ENCODE measurements at regions of chr11 and their contacts with region 1.

Region 1: GRCh38 chr11:117946842-117947526 is 17.8 kb upstream of the TMPRSS13 start:
- DNase-seq: peak; percentile 73
- H3K4me3 Mint-ChIP-seq: peak overlapping the region; percentile 27
- H3K27ac Mint-ChIP-seq: peak overlapping the region; percentile 37
- H3K4me1 Mint-ChIP-seq: peaks cover 83% of the 10 kb centered on the region
- H3K27me3 Mint-ChIP-seq: no peaks in the 10 kb centered on the region

Region 2: DNA sequence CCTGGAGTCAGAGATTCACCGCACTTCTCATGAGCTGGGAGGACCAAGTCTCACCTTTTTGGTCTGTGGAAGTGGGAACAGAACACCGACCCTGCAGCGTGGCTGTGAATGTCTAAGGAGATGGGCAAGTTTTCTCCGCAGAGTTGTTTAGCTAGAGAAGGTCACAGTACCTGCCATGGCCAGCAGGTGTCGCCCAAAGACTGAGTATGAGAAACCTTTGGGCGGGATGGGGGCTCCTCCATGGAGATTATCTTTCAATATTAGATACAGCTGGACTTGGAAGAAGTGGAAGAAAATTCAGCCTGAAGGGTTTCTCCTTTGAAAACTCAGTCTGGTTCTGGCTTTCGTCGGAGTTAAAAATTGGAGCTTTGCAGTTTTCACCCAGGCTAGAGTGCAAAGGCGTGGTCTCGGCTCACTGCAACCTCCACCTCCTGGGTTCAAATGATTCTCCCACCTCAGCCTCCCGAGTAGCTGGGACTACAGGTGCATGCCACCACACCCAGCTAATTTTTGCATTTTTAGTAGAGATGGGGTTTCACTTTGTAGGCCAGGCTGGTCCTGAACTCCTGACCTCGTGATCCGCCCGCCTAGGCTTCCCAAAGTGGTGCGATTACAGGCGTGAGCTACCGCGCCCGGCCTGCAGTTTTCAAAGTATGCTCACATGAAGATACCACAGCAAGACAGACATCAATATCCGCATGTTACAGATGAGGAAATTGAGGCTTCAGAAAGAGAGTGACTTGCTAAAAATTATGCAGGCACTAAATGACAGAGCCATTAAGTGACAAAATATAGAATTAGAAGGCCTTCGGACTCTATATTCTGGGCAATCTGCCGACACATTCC is 139.3 kb before region 1 on chr11:
- intact Hi-C with region 1: loop called (anchors 1 kb)
- DNase-seq: peak; percentile 53
- H3K4me3 Mint-ChIP-seq: no peak overlapping the region
- H3K27ac Mint-ChIP-seq: peak overlapping the region; percentile 30
- H3K4me1 Mint-ChIP-seq: peaks cover 33% of the 10 kb centered on the region
- H3K27me3 Mint-ChIP-seq: peaks cover 5% of the 10 kb centered on the region

Region 3: DNA sequence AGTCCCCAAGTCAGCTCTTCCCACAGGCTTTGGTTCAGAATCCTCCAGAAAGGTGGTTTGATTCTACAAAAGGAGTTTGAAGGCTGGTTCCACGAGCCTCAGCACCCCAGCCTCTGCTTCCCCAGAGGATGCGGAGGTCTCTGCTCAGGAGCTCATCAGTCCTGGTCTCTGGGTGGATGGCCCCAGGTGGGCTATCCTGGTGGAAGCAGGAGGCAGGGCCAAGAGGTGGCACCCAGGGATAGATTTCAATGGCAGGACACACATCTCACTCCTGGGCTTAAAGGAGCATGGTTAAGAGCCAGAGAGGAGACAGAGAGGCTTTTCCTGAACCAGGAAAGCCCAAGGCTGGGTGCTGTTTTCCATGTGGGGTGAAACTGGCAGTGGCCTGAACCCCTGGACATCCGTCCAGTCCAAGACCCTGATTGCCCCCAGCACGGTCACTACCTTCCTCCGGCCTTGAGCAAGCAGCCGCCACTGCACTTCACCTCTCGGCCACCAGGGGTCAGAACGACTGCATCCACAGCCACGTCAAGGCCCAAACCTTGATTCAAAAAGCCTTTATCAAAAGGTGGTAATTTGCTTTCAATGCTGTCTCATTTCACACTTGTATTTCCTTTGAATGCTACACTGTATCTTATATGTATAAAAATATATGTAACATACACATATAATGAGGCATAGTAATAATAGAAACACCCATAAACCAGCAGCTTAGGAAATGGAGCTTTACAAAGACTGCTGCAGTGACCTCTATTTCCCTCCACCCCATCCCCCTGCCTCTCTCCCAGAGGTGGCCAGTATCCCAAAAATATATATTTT is 103.1 kb before region 1 on chr11:
- intact Hi-C with region 1: loop called (anchors 1 kb)
- DNase-seq: peak; percentile 63
- H3K4me3 Mint-ChIP-seq: no peak overlapping the region
- H3K27ac Mint-ChIP-seq: no peak overlapping the region
- H3K4me1 Mint-ChIP-seq: no peaks in the 10 kb centered on the region
- H3K27me3 Mint-ChIP-seq: peaks cover 17% of the 10 kb centered on the region

Region 4: GRCh38 chr11:117959438-117960149 is 12.6 kb after region 1 on chr11:
- intact Hi-C with region 1: loop called (anchors 1 kb)
- DNase-seq: no peak
- H3K4me3 Mint-ChIP-seq: peak overlapping the region; percentile 56
- H3K27ac Mint-ChIP-seq: peak overlapping the region; percentile 74
- H3K4me1 Mint-ChIP-seq: peaks cover 33% of the 10 kb centered on the region
- H3K27me3 Mint-ChIP-seq: no peaks in the 10 kb centered on the region

Region 5: GRCh38 chr11:118002541-118003423 is 55.8 kb after region 1 on chr11:
- intact Hi-C with region 1: loop called (anchors 1 kb)
- DNase-seq: peak; percentile 50
- H3K4me3 Mint-ChIP-seq: peak overlapping the region; percentile 61
- H3K27ac Mint-ChIP-seq: peak overlapping the region; percentile 98
- H3K4me1 Mint-ChIP-seq: peaks cover 92% of the 10 kb centered on the region
- H3K27me3 Mint-ChIP-seq: no peaks in the 10 kb centered on the region